Activated CD4-positive, alpha-beta T cell treated with anti-CD3 and anti-CD28 coated beads, Interleukin-2, amount 10 ng/mL, durations not matched to agents 24 days and 14 days (primary cell): ENCODE measurements at regions of chrX and their contacts with region 1.

Region 1: GRCh38 chrX:42128020-42128419 is 204.7 kb upstream of the CASK start:
- DNase-seq: peak; percentile 73
- H3K4me3 Mint-ChIP-seq: peak overlapping the region; percentile 48
- H3K27ac Mint-ChIP-seq: peak overlapping the region; percentile 74
- H3K4me1 Mint-ChIP-seq: peaks cover 46% of the 10 kb centered on the region
- H3K27me3 Mint-ChIP-seq: no peaks in the 10 kb centered on the region

Region 2: DNA sequence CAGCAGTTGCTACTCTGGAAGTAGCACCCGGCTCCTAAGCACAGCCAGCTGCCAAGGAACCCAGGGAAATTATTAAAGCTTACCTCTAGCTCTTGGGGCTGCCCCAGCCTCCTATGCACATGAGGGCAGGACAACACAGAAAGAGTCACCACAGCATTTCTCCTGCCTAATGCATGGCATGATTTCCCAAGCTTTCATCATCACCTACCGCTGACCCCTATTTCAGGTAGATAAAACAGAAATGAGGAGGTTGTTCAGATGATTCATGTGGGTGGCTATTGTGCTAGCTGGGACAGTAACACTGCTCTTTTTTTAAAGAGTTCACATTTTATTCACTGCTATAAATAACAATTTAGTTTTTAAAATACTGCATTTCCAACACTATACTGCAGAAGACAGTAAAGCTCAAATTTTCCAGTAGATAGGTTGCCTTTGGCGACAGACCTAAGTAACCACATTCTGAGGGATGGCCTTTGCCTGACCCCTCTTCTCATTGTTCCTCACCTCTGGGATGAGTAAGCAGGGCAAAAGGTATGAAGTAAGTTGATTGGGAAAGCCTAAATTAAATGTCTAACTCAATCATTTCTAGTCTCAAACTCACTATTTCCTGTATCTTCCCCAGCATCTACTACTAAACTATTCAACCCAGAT is 221.4 kb before region 1 on chrX:
- intact Hi-C with region 1: loop called (anchors 5 kb)
- DNase-seq: no peak
- H3K4me3 Mint-ChIP-seq: no peak overlapping the region
- H3K27ac Mint-ChIP-seq: peak overlapping the region; percentile 65
- H3K4me1 Mint-ChIP-seq: peaks cover 18% of the 10 kb centered on the region
- H3K27me3 Mint-ChIP-seq: no peaks in the 10 kb centered on the region

Region 3: GRCh38 chrX:42093756-42094155 is 34.3 kb before region 1 on chrX:
- intact Hi-C with region 1: loop called (anchors 5 kb)
- DNase-seq: no peak
- H3K4me3 Mint-ChIP-seq: peak overlapping the region; percentile 6
- H3K27ac Mint-ChIP-seq: peak overlapping the region; percentile 20
- H3K4me1 Mint-ChIP-seq: peaks cover 13% of the 10 kb centered on the region
- H3K27me3 Mint-ChIP-seq: no peaks in the 10 kb centered on the region

Region 4: GRCh38 chrX:42107495-42108488 is 20.2 kb before region 1 on chrX:
- intact Hi-C with region 1: loop called (anchors 1 kb)
- DNase-seq: peak; percentile 55
- H3K4me3 Mint-ChIP-seq: no peak overlapping the region
- H3K27ac Mint-ChIP-seq: peak overlapping the region; percentile 67
- H3K4me1 Mint-ChIP-seq: peaks cover 20% of the 10 kb centered on the region
- H3K27me3 Mint-ChIP-seq: no peaks in the 10 kb centered on the region

Region 5: GRCh38 chrX:42219231-42219630 is 91.2 kb after region 1 on chrX:
- intact Hi-C with region 1: no loop called
- DNase-seq: no peak
- H3K4me3 Mint-ChIP-seq: no peak overlapping the region
- H3K27ac Mint-ChIP-seq: no peak overlapping the region
- H3K4me1 Mint-ChIP-seq: no peaks in the 10 kb centered on the region
- H3K27me3 Mint-ChIP-seq: no peaks in the 10 kb centered on the region

Region 6: GRCh38 chrX:42276982-42277690 is 149.1 kb after region 1 on chrX:
- intact Hi-C with region 1: no loop called
- DNase-seq: no peak
- H3K4me3 Mint-ChIP-seq: no peak overlapping the region
- H3K27ac Mint-ChIP-seq: no peak overlapping the region
- H3K4me1 Mint-ChIP-seq: no peaks in the 10 kb centered on the region
- H3K27me3 Mint-ChIP-seq: no peaks in the 10 kb centered on the region

Region 7: GRCh38 chrX:42289492-42290385 is 161.7 kb after region 1 on chrX:
- intact Hi-C with region 1: loop called (anchors 2 kb)
- DNase-seq: no peak
- H3K4me3 Mint-ChIP-seq: no peak overlapping the region
- H3K27ac Mint-ChIP-seq: peak overlapping the region; percentile 81
- H3K4me1 Mint-ChIP-seq: peaks cover 3% of the 10 kb centered on the region
- H3K27me3 Mint-ChIP-seq: no peaks in the 10 kb centered on the region